CD4-positive, alpha-beta T cell (primary cell): ENCODE measurements at regions of chr20 and their contacts with region 1.

Region 1: DNA sequence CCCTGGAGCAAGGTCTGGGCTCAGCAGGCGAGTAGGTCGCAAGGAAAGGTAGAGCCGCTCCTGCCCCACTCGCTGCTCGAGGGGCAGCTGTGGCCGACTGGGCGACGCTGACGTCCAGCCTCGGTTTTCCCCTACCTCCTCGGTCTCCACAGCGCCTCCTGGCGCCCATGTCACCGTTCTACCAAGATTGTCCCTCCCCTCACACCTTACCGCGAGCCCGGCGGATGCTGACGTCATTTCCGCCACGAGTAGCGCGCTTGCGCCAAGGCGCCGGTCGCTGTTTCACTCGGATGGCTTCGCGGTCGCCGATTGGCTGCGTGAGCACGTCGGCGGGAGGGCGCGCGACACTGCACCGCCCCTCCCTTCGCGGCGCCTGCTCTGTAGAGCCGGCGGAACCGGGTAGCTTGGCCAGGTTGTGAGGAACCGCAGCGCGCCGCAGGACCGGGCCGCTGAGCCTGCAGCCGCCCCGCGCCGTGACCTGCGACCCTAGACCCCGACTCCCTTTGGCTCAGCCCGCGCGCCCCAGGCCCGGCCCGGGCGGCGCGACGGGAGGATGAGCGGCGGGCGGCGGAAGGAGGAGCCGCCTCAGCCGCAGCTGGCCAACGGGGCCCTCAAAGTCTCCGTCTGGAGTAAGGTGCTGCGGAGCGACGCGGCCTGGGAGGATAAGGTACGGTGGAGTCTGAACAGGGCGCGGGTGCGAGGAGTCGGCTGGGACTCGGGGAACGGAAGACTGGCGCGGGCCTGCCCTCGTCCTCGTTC is at the start of gene RAB5IF:
- DNase-seq: peak; percentile 97 to 100 (median 99)
- ATAC-seq: peak; percentile 89
- H3K4me3 ChIP-seq: peak within 1 kb of the TSS; percentile 100
- H3K4me3 Mint-ChIP-seq: peak within 1 kb of the TSS; percentile 98
- H3K27ac ChIP-seq: peak within 1 kb of the TSS; percentile 93 to 97
- H3K27ac Mint-ChIP-seq: peak within 1 kb of the TSS; percentile 97
- H3K4me1 ChIP-seq: peaks cover 37% of the 10 kb centered on the region
- H3K4me1 Mint-ChIP-seq: peaks cover 35% of the 10 kb centered on the region
- H3K27me3 ChIP-seq: no peaks in the 10 kb centered on the region
- H3K27me3 Mint-ChIP-seq: no peaks in the 10 kb centered on the region
- CTCF ChIP-seq: peak; percentile 95
- total RNA-seq, gene RAB5IF: 62.6 to 74.8 TPM

Region 2: DNA sequence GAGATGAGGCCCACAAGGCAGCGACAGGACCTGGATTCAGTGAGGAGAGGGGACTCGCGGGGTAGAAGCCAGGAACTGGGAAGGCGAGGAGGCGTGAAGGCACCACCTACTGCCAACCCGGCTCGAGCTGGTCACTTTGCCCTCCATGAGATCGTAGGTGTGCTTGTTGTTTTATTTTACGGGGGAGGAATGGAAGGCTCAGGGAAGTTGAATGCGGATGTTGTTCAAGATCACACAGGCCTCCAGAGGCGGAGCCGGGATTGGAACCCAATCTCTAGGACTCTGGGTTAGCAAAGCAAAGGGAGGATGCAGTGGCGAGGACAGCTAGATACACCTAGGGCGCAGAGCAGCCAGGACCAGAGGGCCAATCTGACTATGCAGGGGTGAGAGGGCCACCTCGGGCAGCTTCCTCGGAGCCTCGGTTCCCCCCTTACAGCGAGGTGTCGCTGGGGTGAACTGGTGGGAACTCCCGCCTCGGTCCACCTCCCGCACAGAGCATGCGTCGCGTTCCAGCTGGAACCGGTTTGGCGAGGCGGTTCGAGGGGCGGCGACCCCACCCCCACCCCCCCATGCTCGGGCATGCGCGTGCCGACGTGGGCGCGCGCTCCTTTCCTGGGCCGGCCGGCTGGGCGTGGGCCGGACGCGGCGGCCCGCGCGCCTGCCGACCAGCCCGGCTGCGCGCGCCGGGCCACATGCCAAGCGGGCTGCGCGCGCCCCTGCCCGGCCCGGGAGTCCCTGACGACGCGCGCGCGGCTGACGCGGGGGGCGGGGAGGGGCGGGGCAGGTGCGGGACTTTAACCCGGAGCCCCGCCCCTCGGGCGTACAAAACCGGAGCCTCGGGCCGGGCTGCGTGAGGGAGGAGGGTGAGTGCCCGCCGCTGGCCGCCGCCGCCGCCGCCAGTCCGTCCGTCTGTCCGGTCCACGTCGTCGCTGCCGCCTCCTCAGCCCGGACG is 144.7 kb before region 1 on chr20:
- CTCF ChIA-PET with region 1: interaction called, 5 read pairs
- POLR2A ChIA-PET with region 1: interaction called, 8 read pairs
- intact Hi-C with region 1: loop called in 1 of 2 experiments (anchors 5 kb)
- DNase-seq: peak; percentile 79 to 98 (median 90)
- ATAC-seq: peak; percentile 75
- H3K4me3 ChIP-seq: peak overlapping the region; percentile 82
- H3K4me3 Mint-ChIP-seq: peak overlapping the region; percentile 89
- H3K27ac ChIP-seq: peak overlapping the region; percentile 76 to 93
- H3K27ac Mint-ChIP-seq: peak overlapping the region; percentile 84
- H3K4me1 ChIP-seq: peaks cover 50% of the 10 kb centered on the region
- H3K4me1 Mint-ChIP-seq: peaks cover 50% of the 10 kb centered on the region
- H3K27me3 ChIP-seq: no peaks in the 10 kb centered on the region
- H3K27me3 Mint-ChIP-seq: no peaks in the 10 kb centered on the region
- CTCF ChIP-seq: no peak

Region 3: DNA sequence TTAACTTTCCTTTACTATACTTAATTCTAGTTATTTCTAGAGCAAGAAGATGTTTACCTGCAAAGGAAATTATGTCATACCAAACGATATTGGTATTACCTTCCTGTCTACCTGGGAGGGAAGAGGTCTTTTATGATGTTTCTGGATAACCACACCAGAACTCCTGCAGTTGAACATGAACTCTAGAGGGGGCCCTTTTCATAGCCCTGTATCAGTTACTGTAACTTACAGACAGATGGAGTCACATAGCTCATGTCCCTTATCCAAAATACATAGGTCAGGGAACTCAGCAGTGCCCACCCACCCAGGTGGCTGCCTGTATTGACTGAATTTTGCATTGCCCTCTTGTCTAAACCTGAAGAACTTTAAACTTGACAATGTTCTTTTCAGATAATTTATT is 99.3 kb before region 1 on chr20:
- CTCF ChIA-PET with region 1: interaction called, 7 read pairs
- POLR2A ChIA-PET with region 1: interaction called, 3 read pairs
- intact Hi-C with region 1: loop called (anchors 1 kb)
- DNase-seq: peak in 3 of 14 experiments; percentile 45 to 49 (median 47)
- ATAC-seq: peak; percentile 59
- H3K4me3 ChIP-seq: no peak overlapping the region
- H3K4me3 Mint-ChIP-seq: no peak overlapping the region
- H3K27ac ChIP-seq: no peak overlapping the region
- H3K27ac Mint-ChIP-seq: peak overlapping the region; percentile 42
- H3K4me1 ChIP-seq: no peaks in the 10 kb centered on the region
- H3K4me1 Mint-ChIP-seq: peaks cover 16% of the 10 kb centered on the region
- H3K27me3 ChIP-seq: no peaks in the 10 kb centered on the region
- H3K27me3 Mint-ChIP-seq: no peaks in the 10 kb centered on the region
- CTCF ChIP-seq: peak; percentile 31

Region 4: GRCh38 chr20:36562724-36563123 is 42.9 kb before region 1 on chr20:
- CTCF ChIA-PET with region 1: interaction called, 6 read pairs
- POLR2A ChIA-PET with region 1: interaction called, 10 read pairs
- intact Hi-C with region 1: no loop called
- DNase-seq: no peak
- ATAC-seq: no peak
- H3K4me3 ChIP-seq: no peak overlapping the region
- H3K4me3 Mint-ChIP-seq: no peak overlapping the region
- H3K27ac ChIP-seq: no peak overlapping the region
- H3K27ac Mint-ChIP-seq: no peak overlapping the region
- H3K4me1 ChIP-seq: peaks cover 2% of the 10 kb centered on the region
- H3K4me1 Mint-ChIP-seq: no peaks in the 10 kb centered on the region
- H3K27me3 ChIP-seq: no peaks in the 10 kb centered on the region
- H3K27me3 Mint-ChIP-seq: no peaks in the 10 kb centered on the region
- CTCF ChIP-seq: no peak

Region 5: GRCh38 chr20:36591854-36592641 is 13.5 kb before region 1 on chr20:
- CTCF ChIA-PET with region 1: interaction called, 68 read pairs
- POLR2A ChIA-PET with region 1: interaction called, 83 read pairs
- intact Hi-C with region 1: loop called in 1 of 2 experiments (anchors 1 kb)
- DNase-seq: peak in 11 of 14 experiments; percentile 27 to 88 (median 55)
- ATAC-seq: peak; percentile 51
- H3K4me3 ChIP-seq: no peak overlapping the region
- H3K4me3 Mint-ChIP-seq: peak overlapping the region; percentile 63
- H3K27ac ChIP-seq: peak overlapping the region in 1 of 2 donors; percentile 54
- H3K27ac Mint-ChIP-seq: peak overlapping the region; percentile 95
- H3K4me1 ChIP-seq: peaks cover 69% of the 10 kb centered on the region
- H3K4me1 Mint-ChIP-seq: peaks cover 52% of the 10 kb centered on the region
- H3K27me3 ChIP-seq: no peaks in the 10 kb centered on the region
- H3K27me3 Mint-ChIP-seq: no peaks in the 10 kb centered on the region
- CTCF ChIP-seq: peak; percentile 59

Region 6: GRCh38 chr20:36645998-36646397 is 40.4 kb after region 1 on chr20 and contains the start of gene SLA2:
- CTCF ChIA-PET with region 1: interaction called, 15 read pairs
- POLR2A ChIA-PET with region 1: interaction called, 38 read pairs
- intact Hi-C with region 1: loop called in 1 of 2 experiments (anchors 2 kb)
- DNase-seq: peak; percentile 53 to 88 (median 64)
- ATAC-seq: peak; percentile 83
- H3K4me3 ChIP-seq: peak within 1 kb of the TSS; percentile 79
- H3K4me3 Mint-ChIP-seq: peak within 1 kb of the TSS; percentile 98
- H3K27ac ChIP-seq: peak within 1 kb of the TSS; percentile 64 to 69
- H3K27ac Mint-ChIP-seq: peak within 1 kb of the TSS; percentile 97
- H3K4me1 ChIP-seq: peaks cover 56% of the 10 kb centered on the region
- H3K4me1 Mint-ChIP-seq: peaks cover 64% of the 10 kb centered on the region
- H3K27me3 ChIP-seq: no peaks in the 10 kb centered on the region
- H3K27me3 Mint-ChIP-seq: no peaks in the 10 kb centered on the region
- CTCF ChIP-seq: no peak
- total RNA-seq, gene SLA2: 19.9 to 21.3 TPM

Region 7: GRCh38 chr20:36745927-36746659 is 140.5 kb after region 1 on chr20 and contains the start of gene NDRG3:
- CTCF ChIA-PET with region 1: interaction called, 8 read pairs
- POLR2A ChIA-PET with region 1: interaction called, 5 read pairs
- intact Hi-C with region 1: loop called in 1 of 2 experiments (anchors 2 kb)
- DNase-seq: peak; percentile 84 to 97 (median 91)
- ATAC-seq: peak; percentile 98
- H3K4me3 ChIP-seq: peak within 1 kb of the TSS; percentile 92
- H3K4me3 Mint-ChIP-seq: peak within 1 kb of the TSS; percentile 90
- H3K27ac ChIP-seq: peak within 1 kb of the TSS in 1 of 2 donors; percentile 49
- H3K27ac Mint-ChIP-seq: peak within 1 kb of the TSS; percentile 89
- H3K4me1 ChIP-seq: peaks cover 22% of the 10 kb centered on the region
- H3K4me1 Mint-ChIP-seq: peaks cover 21% of the 10 kb centered on the region
- H3K27me3 ChIP-seq: no peaks in the 10 kb centered on the region
- H3K27me3 Mint-ChIP-seq: no peaks in the 10 kb centered on the region
- CTCF ChIP-seq: no peak
- total RNA-seq, gene NDRG3: 17.3 to 17.5 TPM